ENCODE measurements at regions of chr14 and their contacts with region 1.

Region 1: GRCh38 chr14:77593501-77593961 is 22.9 kb downstream of the SPTLC2 start:
- DNase-seq: no peak
- H3K4me3 Mint-ChIP-seq: peak overlapping the region; percentile 66
- H3K27ac Mint-ChIP-seq: peak overlapping the region; percentile 90
- H3K4me1 Mint-ChIP-seq: peaks cover 44% of the 10 kb centered on the region
- H3K27me3 Mint-ChIP-seq: no peaks in the 10 kb centered on the region

Region 2: GRCh38 chr14:77580964-77581505 is 12.5 kb before region 1 on chr14:
- intact Hi-C with region 1: loop called (anchors 1 kb)
- DNase-seq: no peak
- H3K4me3 Mint-ChIP-seq: peak overlapping the region; percentile 61
- H3K27ac Mint-ChIP-seq: peak overlapping the region; percentile 53
- H3K4me1 Mint-ChIP-seq: peaks cover 17% of the 10 kb centered on the region
- H3K27me3 Mint-ChIP-seq: no peaks in the 10 kb centered on the region

Region 3: DNA sequence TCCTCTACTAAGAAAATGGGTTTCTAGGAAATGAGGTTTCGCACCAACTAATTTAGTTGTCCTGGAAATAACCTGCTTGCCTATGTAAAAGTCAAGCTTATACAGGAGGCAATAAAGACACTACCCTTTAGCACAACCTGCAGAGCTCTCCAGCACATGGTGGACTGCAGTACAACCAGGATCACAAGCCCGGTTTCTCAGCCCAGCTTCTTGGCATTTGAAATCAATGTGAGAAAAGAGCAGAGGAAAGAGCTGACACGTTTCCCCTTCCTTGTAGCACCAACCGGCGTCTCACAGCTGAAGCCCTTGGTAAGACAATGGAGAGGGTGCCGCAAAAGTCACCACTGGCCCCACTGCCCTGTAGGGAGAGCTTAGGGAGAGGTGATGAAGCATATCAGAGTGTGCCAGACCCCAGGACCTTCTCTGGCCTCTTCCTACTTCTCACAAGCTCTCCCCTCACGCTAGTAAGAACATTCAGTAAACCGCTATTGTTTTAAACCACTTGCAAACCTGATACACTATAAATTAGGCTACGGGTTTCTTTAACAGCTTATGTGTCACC is 14.3 kb after region 1 on chr14:
- intact Hi-C with region 1: loop called (anchors 2 kb)
- DNase-seq: peak; percentile 75
- H3K4me3 Mint-ChIP-seq: peak overlapping the region; percentile 78
- H3K27ac Mint-ChIP-seq: peak overlapping the region; percentile 88
- H3K4me1 Mint-ChIP-seq: peaks cover 55% of the 10 kb centered on the region
- H3K27me3 Mint-ChIP-seq: no peaks in the 10 kb centered on the region

Region 4: GRCh38 chr14:77799863-77800730 is 206.6 kb after region 1 on chr14 and contains the start of gene ADCK1:
- intact Hi-C with region 1: no loop called
- DNase-seq: peak; percentile 96
- H3K4me3 Mint-ChIP-seq: peak within 1 kb of the TSS; percentile 88
- H3K27ac Mint-ChIP-seq: peak within 1 kb of the TSS; percentile 88
- H3K4me1 Mint-ChIP-seq: peaks cover 7% of the 10 kb centered on the region
- H3K27me3 Mint-ChIP-seq: no peaks in the 10 kb centered on the region
- total RNA-seq, gene ADCK1: 4.9 and 5.3 TPM in 2 replicates

Region 5: GRCh38 chr14:78010688-78011087 is 417.2 kb after region 1 on chr14:
- intact Hi-C with region 1: no loop called
- DNase-seq: no peak
- H3K4me3 Mint-ChIP-seq: no peak overlapping the region
- H3K27ac Mint-ChIP-seq: no peak overlapping the region
- H3K4me1 Mint-ChIP-seq: peaks cover 9% of the 10 kb centered on the region
- H3K27me3 Mint-ChIP-seq: peaks cover 18% of the 10 kb centered on the region